ENCODE measurements at regions of chr20 and their contacts with region 1.

Region 1: DNA sequence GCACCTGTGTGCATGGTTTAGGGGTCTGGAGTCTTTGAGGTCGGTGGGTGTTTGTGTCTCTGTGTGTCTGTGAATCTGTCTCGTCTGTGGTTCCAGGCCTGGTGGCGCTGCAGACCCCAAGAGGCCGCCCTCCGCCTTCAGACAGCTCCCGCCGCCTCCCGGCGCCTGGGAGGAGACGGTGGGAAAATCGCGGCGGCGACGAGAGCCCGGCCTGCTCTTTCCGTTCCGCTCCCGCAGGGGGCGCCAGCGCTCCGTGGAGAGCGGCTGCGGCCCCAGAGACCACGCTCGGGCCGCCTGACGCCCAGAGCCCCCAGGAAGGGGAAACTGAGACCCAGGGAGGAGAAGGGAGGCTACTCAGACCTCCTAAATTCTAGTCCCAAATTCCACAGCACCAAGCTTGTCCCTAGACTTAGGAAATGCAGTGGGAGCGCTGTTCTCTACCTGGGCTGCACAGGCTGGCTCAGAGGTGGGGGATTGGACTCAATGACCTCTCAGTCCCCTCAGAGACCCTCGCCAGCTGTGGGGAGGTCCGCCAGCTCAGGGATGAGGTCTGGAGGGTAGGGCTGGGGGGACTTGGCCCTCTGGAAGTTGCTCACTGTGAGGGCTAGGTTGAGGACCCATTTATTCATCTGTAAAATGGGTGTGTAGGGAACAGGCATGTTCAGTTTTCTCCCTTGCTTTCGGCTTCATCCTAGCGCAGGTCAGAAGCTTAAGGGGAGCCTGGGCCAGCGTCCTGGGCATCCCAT is 36.9 kb upstream of the BLCAP start:
- DNase-seq: peak; percentile 79
- ATAC-seq: peak; percentile 71
- H3K4me3 Mint-ChIP-seq: no peak overlapping the region
- H3K27ac Mint-ChIP-seq: no peak overlapping the region
- H3K4me1 Mint-ChIP-seq: peaks cover 43% of the 10 kb centered on the region
- H3K27me3 Mint-ChIP-seq: peaks cover 6% of the 10 kb centered on the region; the same call in 1 of the 2 replicates
- CTCF ChIP-seq: peak; percentile 98

Region 2: DNA sequence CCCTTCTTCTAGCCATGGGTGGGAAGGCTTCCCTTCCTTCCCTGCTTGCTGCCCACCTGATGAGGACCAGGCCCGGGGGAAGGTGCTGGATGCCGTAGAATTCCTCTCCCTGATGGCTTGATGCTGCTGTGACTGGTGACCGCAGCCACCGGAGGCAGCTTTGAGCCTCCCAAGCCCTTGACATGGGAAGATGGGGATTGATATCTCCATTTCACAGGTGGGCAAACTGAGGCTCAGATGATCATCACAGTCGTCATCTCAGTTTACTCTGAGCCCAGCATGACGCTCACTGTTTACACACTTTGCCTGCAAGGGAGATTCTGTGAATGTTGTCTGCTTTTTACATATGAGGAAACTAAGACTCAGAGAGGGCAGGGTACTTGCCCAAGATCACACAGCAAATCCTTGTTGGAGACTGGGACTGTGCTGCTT is 174.7 kb before region 1 on chr20:
- CTCF ChIA-PET with region 1: no interaction called
- POLR2A ChIA-PET with region 1: no interaction called
- DNase-seq: no peak
- ATAC-seq: no peak
- H3K4me3 Mint-ChIP-seq: no peak overlapping the region
- H3K27ac Mint-ChIP-seq: no peak overlapping the region
- H3K4me1 Mint-ChIP-seq: peaks cover 16% of the 10 kb centered on the region
- H3K27me3 Mint-ChIP-seq: no peaks in the 10 kb centered on the region
- CTCF ChIP-seq: no peak

Region 3: GRCh38 chr20:37439223-37439933 is 125.2 kb before region 1 on chr20:
- CTCF ChIA-PET with region 1: no interaction called
- POLR2A ChIA-PET with region 1: no interaction called
- DNase-seq: no peak
- ATAC-seq: peak; percentile 46
- H3K4me3 Mint-ChIP-seq: no peak overlapping the region
- H3K27ac Mint-ChIP-seq: no peak overlapping the region
- H3K4me1 Mint-ChIP-seq: peaks cover 24% of the 10 kb centered on the region
- H3K27me3 Mint-ChIP-seq: no peaks in the 10 kb centered on the region
- CTCF ChIP-seq: no peak

Region 4: GRCh38 chr20:37480919-37481318 is 83.6 kb before region 1 on chr20:
- CTCF ChIA-PET with region 1: no interaction called
- POLR2A ChIA-PET with region 1: no interaction called
- DNase-seq: no peak
- ATAC-seq: peak; percentile 71
- H3K4me3 Mint-ChIP-seq: no peak overlapping the region
- H3K27ac Mint-ChIP-seq: peak overlapping the region; percentile 10; the same call in 1 of the 2 replicates
- H3K4me1 Mint-ChIP-seq: peaks cover 12% of the 10 kb centered on the region
- H3K27me3 Mint-ChIP-seq: peaks cover 5% of the 10 kb centered on the region
- CTCF ChIP-seq: no peak

Region 5: GRCh38 chr20:37494796-37495195 is 69.8 kb before region 1 on chr20:
- CTCF ChIA-PET with region 1: no interaction called
- POLR2A ChIA-PET with region 1: no interaction called
- DNase-seq: no peak
- ATAC-seq: no peak
- H3K4me3 Mint-ChIP-seq: no peak overlapping the region
- H3K27ac Mint-ChIP-seq: no peak overlapping the region
- H3K4me1 Mint-ChIP-seq: no peaks in the 10 kb centered on the region
- H3K27me3 Mint-ChIP-seq: no peaks in the 10 kb centered on the region; the same call in 1 of the 2 replicates
- CTCF ChIP-seq: no peak

Region 6: DNA sequence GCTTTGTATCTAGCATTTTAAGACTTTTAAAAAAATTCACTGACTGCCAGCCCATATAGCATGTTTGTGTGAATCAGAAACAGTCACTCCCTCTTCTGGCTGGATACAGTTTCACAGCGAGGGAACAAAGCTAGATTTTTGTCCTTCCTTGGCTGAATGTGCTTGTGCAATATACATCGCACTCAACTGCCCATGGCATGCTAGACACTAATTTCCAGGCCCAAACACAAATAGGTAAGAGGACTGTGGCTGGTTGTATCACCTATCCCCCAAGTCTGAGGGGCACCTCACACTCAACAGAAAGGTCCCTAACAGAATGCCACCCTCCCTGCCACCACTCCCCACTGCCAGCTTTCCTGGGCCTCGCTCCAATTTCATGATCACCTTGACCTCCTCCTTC is 20.7 kb before region 1 on chr20:
- CTCF ChIA-PET with region 1: interaction called, 12 read pairs
- POLR2A ChIA-PET with region 1: no interaction called
- DNase-seq: no peak
- ATAC-seq: peak; percentile 62
- H3K4me3 Mint-ChIP-seq: no peak overlapping the region
- H3K27ac Mint-ChIP-seq: 0 out of 2 replicates have a peak overlapping the region, but pooled peaks have one; percentile 55
- H3K4me1 Mint-ChIP-seq: peaks cover 7% of the 10 kb centered on the region
- H3K27me3 Mint-ChIP-seq: no peaks in the 10 kb centered on the region; the same call in 1 of the 2 replicates
- CTCF ChIP-seq: no peak

Region 7: DNA sequence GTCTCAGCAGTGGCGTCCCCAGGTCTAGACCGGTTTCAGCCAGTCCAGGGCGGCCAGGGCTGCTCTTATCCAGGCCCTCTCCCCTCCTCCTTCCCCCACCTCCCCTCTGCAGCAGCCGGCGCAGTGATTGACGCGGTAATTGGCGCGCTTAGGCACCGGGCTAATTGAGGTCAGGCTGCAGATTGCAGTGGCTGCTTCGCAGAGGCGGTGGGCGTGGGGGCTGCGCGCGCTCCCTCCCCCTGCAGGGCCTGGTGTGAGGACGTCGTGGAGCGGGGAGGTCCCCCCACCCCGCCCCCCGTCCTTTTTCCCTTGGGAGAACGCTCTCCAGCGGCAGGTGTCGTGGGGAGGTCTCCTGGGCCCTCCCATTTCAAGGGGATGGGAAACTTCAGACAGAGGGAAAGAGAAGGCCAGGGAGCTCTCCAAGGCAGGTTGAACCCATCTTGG is 33.6 kb after region 1 on chr20:
- CTCF ChIA-PET with region 1: interaction called, 22 read pairs
- POLR2A ChIA-PET with region 1: no interaction called
- DNase-seq: peak; percentile 77
- ATAC-seq: peak; percentile 85
- H3K4me3 Mint-ChIP-seq: peak overlapping the region; percentile 31
- H3K27ac Mint-ChIP-seq: no peak overlapping the region
- H3K4me1 Mint-ChIP-seq: peaks cover 15% of the 10 kb centered on the region
- H3K27me3 Mint-ChIP-seq: no peaks in the 10 kb centered on the region; the same call in 1 of the 2 replicates
- CTCF ChIP-seq: no peak

Region 8: GRCh38 chr20:37661519-37661918 is 97.0 kb after region 1 on chr20:
- CTCF ChIA-PET with region 1: interaction called, 11 read pairs
- POLR2A ChIA-PET with region 1: no interaction called
- DNase-seq: no peak
- ATAC-seq: no peak
- H3K4me3 Mint-ChIP-seq: no peak overlapping the region
- H3K27ac Mint-ChIP-seq: peak overlapping the region; percentile 27
- H3K4me1 Mint-ChIP-seq: peaks cover 17% of the 10 kb centered on the region
- H3K27me3 Mint-ChIP-seq: no peaks in the 10 kb centered on the region
- CTCF ChIP-seq: no peak

Region 9: DNA sequence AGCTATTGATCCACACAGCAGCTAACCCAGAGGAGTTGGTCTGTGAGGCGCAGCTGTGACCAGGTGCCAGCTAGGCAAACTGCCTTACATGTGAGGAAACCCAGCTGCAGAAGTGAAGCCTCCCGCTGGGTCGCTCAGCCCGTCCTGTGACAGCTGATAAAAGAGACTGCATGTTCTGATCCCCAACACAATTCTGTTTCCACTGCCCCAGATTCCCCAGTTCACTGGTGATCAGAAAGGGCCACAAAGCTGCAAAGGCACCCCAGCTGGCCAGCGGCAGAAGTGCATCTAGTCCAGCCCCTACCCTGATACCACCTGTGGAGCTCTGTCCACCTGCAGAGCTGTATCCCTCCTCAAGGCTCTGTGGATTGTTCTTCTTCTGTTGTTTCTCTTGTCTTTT is 193.8 kb after region 1 on chr20:
- CTCF ChIA-PET with region 1: interaction called, 19 read pairs
- POLR2A ChIA-PET with region 1: no interaction called
- DNase-seq: peak; percentile 70
- ATAC-seq: peak; percentile 97
- H3K4me3 Mint-ChIP-seq: no peak overlapping the region
- H3K27ac Mint-ChIP-seq: no peak overlapping the region
- H3K4me1 Mint-ChIP-seq: no peaks in the 10 kb centered on the region
- H3K27me3 Mint-ChIP-seq: no peaks in the 10 kb centered on the region
- CTCF ChIP-seq: peak; percentile 32; the same call in 1 of the 2 replicates

Region 10: DNA sequence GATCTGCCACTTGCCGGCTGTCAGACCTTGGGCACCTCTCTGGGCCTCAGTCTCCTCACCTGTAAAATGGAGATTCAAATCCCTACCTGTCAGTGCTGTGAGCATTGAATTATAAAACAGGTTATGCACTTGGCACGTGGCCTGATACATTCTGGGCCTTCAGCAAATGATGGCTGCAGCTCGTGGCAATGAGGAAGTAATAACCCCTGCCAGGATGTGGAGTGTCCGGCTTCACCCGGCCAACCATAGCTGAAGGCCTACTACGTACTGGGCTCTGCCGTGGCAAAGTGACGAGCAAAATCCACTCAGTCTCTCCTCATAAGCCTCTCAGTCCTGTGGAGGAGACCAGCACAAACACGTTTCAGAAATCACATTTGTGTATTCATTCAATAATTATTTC is 327.4 kb after region 1 on chr20:
- CTCF ChIA-PET with region 1: interaction called, 18 read pairs
- POLR2A ChIA-PET with region 1: no interaction called
- DNase-seq: no peak
- ATAC-seq: no peak
- H3K4me3 Mint-ChIP-seq: no peak overlapping the region
- H3K27ac Mint-ChIP-seq: no peak overlapping the region
- H3K4me1 Mint-ChIP-seq: peaks cover 2% of the 10 kb centered on the region
- H3K27me3 Mint-ChIP-seq: no peaks in the 10 kb centered on the region
- CTCF ChIP-seq: no peak

Region 11: DNA sequence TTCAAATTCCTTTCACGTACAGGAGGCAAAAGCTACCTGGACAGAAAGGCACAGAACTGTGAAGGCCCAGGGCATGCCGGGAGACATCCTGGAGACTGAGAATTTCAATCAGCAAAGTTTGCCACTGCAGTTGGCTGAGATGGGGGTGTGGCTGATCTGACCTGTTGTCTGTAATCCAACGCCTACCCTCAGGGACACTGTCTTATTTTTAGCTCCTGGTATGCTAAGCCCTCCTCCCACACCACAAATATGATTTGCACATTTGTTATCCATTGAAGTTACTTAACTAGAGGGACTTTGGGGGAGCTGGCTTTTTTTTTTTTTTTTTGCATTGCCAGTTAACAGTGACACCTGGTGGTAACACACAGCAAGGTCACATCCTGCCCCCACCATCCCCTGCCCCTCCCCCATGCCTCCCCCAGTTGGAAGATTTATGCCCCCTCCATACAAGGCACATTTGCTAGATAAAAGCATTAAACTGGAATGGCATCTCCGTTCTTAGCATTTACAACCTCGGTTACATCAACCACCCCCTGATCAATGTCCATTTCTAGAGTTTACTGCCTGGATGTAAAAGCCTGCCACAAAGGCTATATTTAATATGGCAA is 428.3 kb after region 1 on chr20:
- CTCF ChIA-PET with region 1: interaction called, 29 read pairs
- POLR2A ChIA-PET with region 1: no interaction called
- DNase-seq: no peak
- ATAC-seq: no peak; the same call in 1 of the 2 replicates
- H3K4me3 Mint-ChIP-seq: no peak overlapping the region
- H3K27ac Mint-ChIP-seq: no peak overlapping the region
- H3K4me1 Mint-ChIP-seq: peaks cover 4% of the 10 kb centered on the region; the same call in 1 of the 2 replicates
- H3K27me3 Mint-ChIP-seq: no peaks in the 10 kb centered on the region
- CTCF ChIP-seq: peak; percentile 70

Measured in WTC11 (cell line).